HCT116 (cell line): ENCODE measurements at regions of chr7 and their contacts with region 1.

Region 1: DNA sequence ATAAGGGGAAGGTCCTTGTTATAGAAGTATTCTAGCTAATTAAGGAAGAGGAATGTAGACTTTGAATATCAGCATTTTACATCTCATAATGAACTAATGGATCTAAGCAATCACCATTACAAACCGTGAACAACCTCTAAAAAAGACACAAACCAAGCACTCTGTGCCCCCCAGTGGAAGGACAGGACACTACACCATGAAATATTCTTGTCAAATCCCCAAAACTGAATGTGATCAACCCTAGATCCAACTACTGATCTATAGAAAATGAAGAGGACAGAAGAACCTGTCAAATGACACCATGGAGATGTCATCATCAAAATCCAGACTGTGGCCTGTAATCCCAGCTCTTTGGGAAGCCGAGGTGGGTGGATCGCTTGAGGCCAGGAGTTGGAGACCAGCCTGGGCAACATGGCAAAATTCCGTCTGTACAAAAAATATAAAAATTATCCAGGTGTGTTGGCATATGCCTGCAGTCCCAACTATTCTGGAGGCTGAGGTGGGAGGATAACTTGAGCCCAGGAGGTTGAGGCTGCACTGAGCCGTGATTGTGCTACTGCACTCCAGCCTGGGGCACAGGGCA is 111.3 kb upstream of the CARD11 start:
- DNase-seq: peak; percentile 32
- ATAC-seq: peak; percentile 72
- H3K4me3 ChIP-seq: no peak overlapping the region
- H3K27ac ChIP-seq: no peak overlapping the region
- H3K4me1 ChIP-seq: no peaks in the 10 kb centered on the region
- H3K27me3 ChIP-seq: peaks cover 3% of the 10 kb centered on the region; the same call in 1 of the 2 replicates
- CTCF ChIP-seq: peak; percentile 56 to 67 (median 66)
- POLR2A ChIP-seq: no peak
- RAD21 ChIP-seq: peak; percentile 77

Region 2: DNA sequence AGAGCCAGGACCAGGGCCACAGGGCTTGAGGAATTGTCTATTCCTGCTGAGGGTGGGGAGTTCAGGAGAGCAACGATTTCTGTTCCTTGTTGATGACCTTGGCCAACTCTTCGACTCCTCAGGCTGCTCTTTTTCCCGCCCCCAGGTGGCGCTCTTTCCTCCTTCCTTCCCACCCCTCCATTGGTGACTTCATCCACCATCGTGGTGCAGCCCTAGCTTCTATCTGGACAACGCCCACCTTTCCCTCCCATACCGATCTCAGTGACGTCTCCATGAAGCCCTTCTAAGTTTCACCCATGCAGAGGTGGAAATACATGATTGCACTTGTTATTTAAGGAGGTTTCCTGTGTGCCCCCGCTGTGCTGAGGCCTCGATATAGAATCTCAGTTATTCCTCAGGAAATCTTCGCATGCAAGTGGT is 89.3 kb before region 1 on chr7:
- CTCF ChIA-PET with region 1: no interaction called
- POLR2A ChIA-PET with region 1: no interaction called
- RAD21 ChIA-PET with region 1: no interaction called
- intact Hi-C with region 1: loop called (anchors 1 kb)
- DNase-seq: peak; percentile 59
- ATAC-seq: peak; percentile 98
- H3K4me3 ChIP-seq: no peak overlapping the region
- H3K27ac ChIP-seq: no peak overlapping the region
- H3K4me1 ChIP-seq: no peaks in the 10 kb centered on the region
- H3K27me3 ChIP-seq: peaks cover 12% of the 10 kb centered on the region; the same call in 1 of the 2 replicates
- CTCF ChIP-seq: peak; percentile 55 to 93 (median 87); a peak in 5 of 6 replicates
- POLR2A ChIP-seq: no peak
- RAD21 ChIP-seq: peak; percentile 69

Region 3: DNA sequence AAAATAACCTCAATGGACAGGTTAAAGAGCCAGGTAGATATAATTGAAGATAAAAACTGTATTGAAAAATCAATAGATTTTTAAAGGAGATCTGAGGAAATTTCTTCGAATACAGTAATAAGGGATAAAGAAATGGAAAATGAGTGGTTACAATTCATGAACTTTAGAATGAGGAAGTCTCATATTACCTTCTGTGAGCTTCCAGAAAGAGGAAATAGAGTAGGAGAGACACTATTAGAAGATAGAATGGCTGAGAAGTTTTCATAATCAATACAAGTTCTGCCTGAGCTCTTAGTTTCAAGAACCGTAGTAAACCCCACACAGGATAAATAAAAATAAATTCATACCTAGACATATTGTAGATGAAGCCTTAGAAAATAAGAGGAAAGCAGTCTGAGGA is 157.6 kb after region 1 on chr7:
- CTCF ChIA-PET with region 1: no interaction called
- POLR2A ChIA-PET with region 1: no interaction called
- RAD21 ChIA-PET with region 1: no interaction called
- intact Hi-C with region 1: no loop called
- DNase-seq: no peak
- ATAC-seq: no peak
- H3K4me3 ChIP-seq: no peak overlapping the region
- H3K27ac ChIP-seq: no peak overlapping the region
- H3K4me1 ChIP-seq: no peaks in the 10 kb centered on the region
- H3K27me3 ChIP-seq: peaks cover 41% of the 10 kb centered on the region
- CTCF ChIP-seq: no peak
- POLR2A ChIP-seq: no peak
- RAD21 ChIP-seq: no peak